ENCODE measurements at regions of chr10 and their contacts with region 1.

Region 1: GRCh38 chr10:78302989-78303854 is 269.6 kb downstream of the RPS24 start:
- DNase-seq: peak; percentile 99
- H3K4me3 ChIP-seq: peak overlapping the region; percentile 47 to 79 (median 52)
- H3K27ac ChIP-seq: peak overlapping the region; percentile 91 to 98 (median 96)
- H3K4me1 ChIP-seq: peaks cover 13 to 53% (median 34%) of the 10 kb centered on the region in 6 donors
- H3K27me3 ChIP-seq: no peaks in the 10 kb centered on the region
- CTCF ChIP-seq: peak; percentile 87 to 98 (median 92)
- POLR2A ChIP-seq: peak; percentile 31 to 55 (median 52)

Region 2: GRCh38 chr10:77965294-77965693 is 337.9 kb before region 1 on chr10:
- intact Hi-C with region 1: no loop called
- DNase-seq: no peak
- H3K4me3 ChIP-seq: no peak overlapping the region
- H3K27ac ChIP-seq: no peak overlapping the region
- H3K4me1 ChIP-seq: no peaks in the 10 kb centered on the region
- H3K27me3 ChIP-seq: peaks cover 0 to 7% (median 0%) of the 10 kb centered on the region in 7 donors
- CTCF ChIP-seq: no peak
- POLR2A ChIP-seq: no peak

Region 3: GRCh38 chr10:78047314-78047891 is 255.8 kb before region 1 on chr10:
- intact Hi-C with region 1: loop called (anchors 5 kb)
- DNase-seq: peak; percentile 94
- H3K4me3 ChIP-seq: no peak overlapping the region
- H3K27ac ChIP-seq: no peak overlapping the region
- H3K4me1 ChIP-seq: peaks cover 0 to 35% (median 15%) of the 10 kb centered on the region in 6 donors
- H3K27me3 ChIP-seq: no peaks in the 10 kb centered on the region
- CTCF ChIP-seq: peak; percentile 64 to 88 (median 82)
- POLR2A ChIP-seq: no peak

Region 4: DNA sequence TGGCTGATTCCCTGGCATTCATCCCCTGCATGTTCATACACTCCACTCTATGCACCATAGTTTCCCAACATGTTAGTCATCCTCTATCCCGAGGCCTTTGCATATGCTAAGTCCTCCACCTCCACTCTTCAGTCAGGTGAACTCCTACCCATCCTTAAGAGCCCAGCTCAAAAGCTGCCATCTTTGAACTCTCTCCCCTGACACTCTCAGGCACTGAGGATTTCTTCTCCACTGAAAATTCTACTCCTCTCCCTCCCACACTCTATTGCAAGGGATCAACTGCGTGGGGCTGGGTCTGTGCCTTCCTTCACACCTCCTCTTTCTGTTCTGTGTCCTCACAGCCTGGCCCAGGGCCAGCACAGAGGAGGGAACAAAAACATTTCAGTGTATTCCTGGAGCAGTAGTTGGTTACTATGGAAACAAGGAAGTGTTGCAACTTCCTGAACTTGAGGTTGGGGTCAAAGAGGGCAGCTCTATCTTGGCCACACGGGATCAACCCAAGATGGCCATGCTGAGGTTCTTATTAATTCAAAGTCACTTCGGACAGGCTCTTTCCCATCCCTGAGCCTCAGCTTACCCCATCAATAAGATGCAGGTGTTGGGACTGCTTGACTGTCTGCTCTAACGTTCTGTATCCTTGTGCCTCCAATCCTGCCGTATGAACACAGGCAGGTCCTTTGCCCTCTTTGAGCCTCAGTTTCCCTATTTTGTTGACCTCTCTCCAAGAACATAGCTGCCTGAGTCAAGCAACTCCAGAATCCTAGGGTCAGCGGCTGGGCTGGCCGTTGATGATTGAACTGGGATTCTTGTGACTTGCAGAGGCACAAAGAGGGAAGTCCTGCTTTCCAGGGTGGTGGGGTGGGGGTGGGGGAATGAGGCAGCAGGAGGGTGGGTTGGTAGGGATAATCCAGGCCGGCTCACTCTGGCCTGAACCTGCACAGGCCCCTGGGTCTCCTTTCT is 781.1 kb after region 1 on chr10:
- intact Hi-C with region 1: no loop called
- DNase-seq: peak; percentile 94
- H3K4me3 ChIP-seq: peak overlapping the region in 1 of 8 donors; percentile 47
- H3K27ac ChIP-seq: peak overlapping the region; percentile 0 to 96 (median 78)
- H3K4me1 ChIP-seq: peaks cover 82 to 100% (median 94%) of the 10 kb centered on the region in 6 donors
- H3K27me3 ChIP-seq: peaks cover 0 to 15% (median 0%) of the 10 kb centered on the region in 7 donors
- CTCF ChIP-seq: peak in 1 of 11 experiments; percentile 13
- POLR2A ChIP-seq: no peak

Measured in spleen (tissue), 13 donors.